Activated CD4-positive, alpha-beta memory T cell treated with anti-CD3 and anti-CD28 coated beads for 36 hours (primary cell): ENCODE measurements at regions of chr22 and their contacts with region 1.

Region 1: GRCh38 chr22:19970479-19971275 is 29.1 kb upstream of the TXNRD2 start:
- DNase-seq: peak; percentile 82
- H3K4me3 Mint-ChIP-seq: no peak overlapping the region
- H3K27ac Mint-ChIP-seq: no peak overlapping the region
- H3K4me1 Mint-ChIP-seq: peaks cover 3% of the 10 kb centered on the region
- H3K27me3 Mint-ChIP-seq: no peaks in the 10 kb centered on the region

Region 2: DNA sequence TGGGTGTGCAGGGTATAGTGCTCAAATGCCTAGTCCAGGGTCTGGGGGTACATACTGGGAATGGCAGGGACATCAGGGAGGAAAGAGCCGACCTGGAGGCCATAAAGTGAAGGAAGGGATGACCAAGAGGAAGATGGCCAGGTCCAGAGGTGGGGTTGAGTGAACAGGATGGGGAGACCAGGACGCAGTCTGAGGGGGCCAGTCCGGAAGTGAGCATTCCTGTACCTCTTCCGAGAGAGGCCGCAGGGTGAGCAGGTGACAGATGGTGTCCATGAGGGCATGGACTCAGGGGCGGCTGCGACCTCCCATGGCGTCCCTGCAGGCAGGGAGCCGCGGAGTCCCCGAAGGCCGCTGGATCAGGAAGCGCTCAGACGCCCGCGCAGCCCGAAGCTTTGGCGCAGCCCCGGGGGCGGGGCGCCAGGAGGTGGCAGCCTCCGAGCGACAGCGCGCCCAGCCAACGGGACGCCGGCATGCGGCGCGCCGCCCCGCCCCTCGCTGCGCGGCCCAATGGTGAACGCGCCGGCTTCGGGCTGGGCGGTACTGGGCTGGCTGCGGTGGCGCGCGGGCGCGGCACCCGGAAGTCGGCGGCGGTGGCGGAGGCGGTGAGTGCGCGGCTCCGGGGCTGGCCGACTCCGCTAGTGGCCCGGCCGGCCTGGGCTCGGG is 50.0 kb after region 1 on chr22 and contains the start of gene TANGO2:
- CTCF ChIA-PET with region 1: interaction called, 15 read pairs
- POLR2A ChIA-PET with region 1: no interaction called
- intact Hi-C with region 1: no loop called
- DNase-seq: peak; percentile 94
- H3K4me3 Mint-ChIP-seq: peak within 1 kb of the TSS; percentile 91
- H3K27ac Mint-ChIP-seq: peak within 1 kb of the TSS; percentile 83
- H3K4me1 Mint-ChIP-seq: peaks cover 30% of the 10 kb centered on the region
- H3K27me3 Mint-ChIP-seq: no peaks in the 10 kb centered on the region
- total RNA-seq, gene TANGO2: 20.7 to 23.6 TPM

Region 3: DNA sequence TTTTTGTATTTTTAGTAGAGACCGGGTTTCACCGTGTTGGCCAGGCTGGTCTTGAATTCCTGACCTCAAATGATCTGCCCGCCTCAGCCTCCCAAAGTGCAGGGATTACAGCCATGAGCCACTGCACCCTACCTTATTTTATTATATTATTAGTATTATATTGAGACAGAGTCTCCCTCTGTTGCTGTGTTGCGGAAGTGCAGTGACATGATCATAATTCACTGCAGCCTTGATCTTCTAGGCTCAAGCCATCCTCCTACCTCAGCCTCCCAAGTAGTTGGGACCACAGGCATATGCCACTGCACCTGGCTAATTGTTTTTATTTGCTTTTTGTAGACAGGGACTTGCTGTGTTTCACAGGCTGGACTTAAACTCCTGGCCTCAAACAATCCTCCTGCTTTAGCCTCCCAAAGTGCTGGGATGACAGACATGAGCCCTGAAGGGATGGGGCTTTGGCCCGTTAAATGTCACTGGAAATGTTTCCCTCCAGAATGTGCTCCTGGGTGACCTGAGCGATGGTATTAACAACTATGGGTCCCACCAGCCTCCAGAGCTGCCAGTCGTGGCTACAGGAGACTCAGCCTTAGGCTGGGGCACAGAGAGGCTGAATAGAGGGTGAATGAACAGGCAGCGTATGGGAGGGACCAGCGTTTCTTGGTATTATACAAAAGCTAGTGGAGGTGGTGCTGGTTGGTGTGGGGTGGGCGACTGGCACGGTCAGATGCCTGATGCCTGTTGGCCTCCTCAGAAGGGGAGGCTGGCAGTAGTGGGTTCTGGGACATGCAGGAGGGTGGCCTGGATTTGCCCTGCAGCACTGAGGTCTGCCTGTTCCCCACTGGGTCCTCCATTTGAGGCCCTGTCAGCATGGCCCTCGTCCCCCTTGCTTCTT is 57.5 kb after region 1 on chr22:
- CTCF ChIA-PET with region 1: interaction called, 10 read pairs
- POLR2A ChIA-PET with region 1: no interaction called
- intact Hi-C with region 1: no loop called
- DNase-seq: no peak
- H3K4me3 Mint-ChIP-seq: no peak overlapping the region
- H3K27ac Mint-ChIP-seq: no peak overlapping the region
- H3K4me1 Mint-ChIP-seq: peaks cover 20% of the 10 kb centered on the region
- H3K27me3 Mint-ChIP-seq: no peaks in the 10 kb centered on the region

Region 4: GRCh38 chr22:20111045-20111688 is 140.5 kb after region 1 on chr22:
- CTCF ChIA-PET with region 1: interaction called, 14 read pairs
- POLR2A ChIA-PET with region 1: no interaction called
- intact Hi-C with region 1: no loop called
- DNase-seq: peak; percentile 54
- H3K4me3 Mint-ChIP-seq: no peak overlapping the region
- H3K27ac Mint-ChIP-seq: peak overlapping the region; percentile 86
- H3K4me1 Mint-ChIP-seq: peaks cover 19% of the 10 kb centered on the region
- H3K27me3 Mint-ChIP-seq: no peaks in the 10 kb centered on the region

Region 5: GRCh38 chr22:20130739-20131596 is 160.3 kb after region 1 on chr22:
- CTCF ChIA-PET with region 1: interaction called, 25 read pairs
- POLR2A ChIA-PET with region 1: no interaction called
- intact Hi-C with region 1: loop called (anchors 1 kb)
- DNase-seq: peak; percentile 75
- H3K4me3 Mint-ChIP-seq: peak overlapping the region; percentile 45
- H3K27ac Mint-ChIP-seq: no peak overlapping the region
- H3K4me1 Mint-ChIP-seq: peaks cover 32% of the 10 kb centered on the region
- H3K27me3 Mint-ChIP-seq: no peaks in the 10 kb centered on the region